ENCODE measurements at regions of chr1 and their contacts with region 1.

Region 1: DNA sequence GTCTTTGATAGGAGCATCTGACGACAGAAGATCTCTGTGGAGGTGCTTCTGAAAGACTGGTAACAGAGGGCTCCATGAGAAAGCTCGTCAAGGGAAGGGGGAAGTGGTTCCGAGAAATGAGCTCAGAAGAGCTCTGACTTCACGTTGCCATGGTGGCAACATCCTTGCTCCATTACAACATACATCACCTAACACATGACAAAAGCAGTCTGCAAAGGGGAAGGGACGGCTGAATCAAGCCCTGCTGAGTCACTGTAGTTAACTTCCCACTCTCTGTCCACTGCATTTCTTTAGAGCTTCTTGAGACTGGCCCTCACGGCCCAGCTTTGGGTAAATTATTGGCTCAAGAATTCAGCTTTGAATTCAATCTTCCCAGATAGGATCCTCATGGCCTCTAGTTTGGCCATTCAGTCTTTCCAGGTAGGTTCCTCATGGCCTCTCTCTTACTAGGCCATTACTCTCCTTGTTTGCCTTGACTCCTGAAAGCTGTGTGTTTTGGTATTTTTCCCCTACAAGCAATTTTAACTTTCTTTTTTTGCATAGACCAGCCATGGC is 88.0 kb upstream of the ZNF648 start:
- H3K4me3 ChIP-seq: no peak overlapping the region
- H3K27ac ChIP-seq: no peak overlapping the region
- H3K4me1 ChIP-seq: no peaks in the 10 kb centered on the region
- CTCF ChIP-seq: no peak

Region 2: GRCh38 chr1:182071924-182072323 is 77.6 kb before region 1 on chr1:
- CTCF ChIA-PET with region 1: no interaction called
- POLR2A ChIA-PET with region 1: no interaction called
- H3K4me3 ChIP-seq: no peak overlapping the region
- H3K27ac ChIP-seq: no peak overlapping the region
- H3K4me1 ChIP-seq: no peaks in the 10 kb centered on the region
- CTCF ChIP-seq: no peak

Region 3: GRCh38 chr1:182391362-182392044 is 242.0 kb after region 1 on chr1 and contains the start of gene GLUL:
- CTCF ChIA-PET with region 1: interaction called, 123 read pairs
- POLR2A ChIA-PET with region 1: interaction called, 28 read pairs
- H3K4me3 ChIP-seq: peak within 1 kb of the TSS; percentile 74
- H3K27ac ChIP-seq: peak within 1 kb of the TSS; percentile 89
- H3K4me1 ChIP-seq: no peaks in the 10 kb centered on the region
- CTCF ChIP-seq: peak; percentile 67

Region 4: DNA sequence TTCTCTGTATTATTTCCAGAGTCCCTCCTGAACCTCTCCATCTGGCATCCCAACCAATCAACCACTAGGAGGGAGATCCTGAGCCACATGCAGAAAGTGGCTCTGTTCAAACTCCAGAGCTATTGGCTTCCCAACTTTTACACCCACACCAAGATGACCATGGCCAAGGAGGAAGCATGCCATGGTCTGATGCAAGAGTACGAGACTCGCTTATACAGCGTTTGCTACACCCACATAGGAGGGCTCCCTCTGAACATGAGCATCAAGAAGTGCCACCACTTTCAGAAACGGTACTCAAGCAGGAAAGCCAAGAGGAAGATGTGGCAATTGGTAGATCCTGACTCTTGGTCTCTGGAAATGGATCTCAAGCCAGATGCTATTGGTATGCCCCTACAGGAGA is 324.1 kb after region 1 on chr1:
- CTCF ChIA-PET with region 1: no interaction called
- POLR2A ChIA-PET with region 1: no interaction called
- H3K4me3 ChIP-seq: no peak overlapping the region
- H3K27ac ChIP-seq: no peak overlapping the region
- H3K4me1 ChIP-seq: no peaks in the 10 kb centered on the region
- CTCF ChIP-seq: no peak

Measured in HEK293 (cell line).